Right ventricle myocardium inferior (tissue), 1 donor: ENCODE measurements at regions of chr6 and their contacts with region 1.

Region 1: DNA sequence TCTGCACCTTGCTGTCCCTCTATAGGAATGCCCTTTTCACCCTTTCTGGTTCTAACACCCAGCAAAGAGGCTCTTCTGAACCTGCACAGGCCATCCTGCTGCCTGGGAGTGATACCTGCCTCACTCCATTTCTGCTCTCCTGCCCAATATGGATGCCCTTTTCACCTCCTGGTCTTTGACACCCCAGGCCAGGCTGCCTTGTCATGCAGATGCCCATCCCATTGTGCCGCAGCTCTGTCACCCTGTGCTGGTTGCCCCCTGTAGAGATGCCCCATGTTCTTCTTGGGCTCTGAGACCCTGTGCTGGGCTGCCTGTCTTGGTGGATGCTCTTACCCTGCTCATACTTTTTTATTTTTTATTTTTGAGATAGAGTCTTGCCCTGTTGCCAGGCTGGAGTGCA is 95.3 kb downstream of the CDKAL1 start:
- DNase-seq: no peak
- ATAC-seq: no peak

Region 2: GRCh38 chr6:20673458-20673857 is 43.9 kb after region 1 on chr6:
- intact Hi-C with region 1: loop called (anchors 2 kb)
- DNase-seq: no peak
- ATAC-seq: no peak